ENCODE measurements at regions of chr20 and their contacts with region 1.

Region 1: GRCh38 chr20:24507182-24507853 is 37.9 kb downstream of the SYNDIG1 start:
- DNase-seq: peak in 10 of 42 donors; percentile 19 to 54 (median 35)

Region 2: DNA sequence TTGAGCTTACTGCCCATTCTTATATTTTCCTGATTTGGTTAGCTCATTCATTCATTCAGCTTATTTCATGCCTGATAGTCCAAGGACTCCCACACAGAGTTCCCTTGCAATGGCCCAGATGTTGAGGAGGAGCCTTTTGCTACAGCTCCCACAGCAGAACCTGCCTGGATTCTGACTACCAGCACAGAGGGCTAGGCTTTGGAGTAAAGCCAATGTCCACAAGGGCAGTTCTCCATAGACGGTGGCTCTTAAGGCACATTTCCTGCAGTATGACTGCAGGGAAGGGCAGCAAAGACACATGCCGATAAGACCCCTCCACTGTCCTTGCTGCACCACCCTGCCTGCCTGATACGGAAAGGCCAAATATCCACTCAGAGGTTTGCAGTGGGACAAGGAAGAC is 150.1 kb before region 1 on chr20:
- intact Hi-C with region 1: no loop called
- DNase-seq: no peak

Region 3: DNA sequence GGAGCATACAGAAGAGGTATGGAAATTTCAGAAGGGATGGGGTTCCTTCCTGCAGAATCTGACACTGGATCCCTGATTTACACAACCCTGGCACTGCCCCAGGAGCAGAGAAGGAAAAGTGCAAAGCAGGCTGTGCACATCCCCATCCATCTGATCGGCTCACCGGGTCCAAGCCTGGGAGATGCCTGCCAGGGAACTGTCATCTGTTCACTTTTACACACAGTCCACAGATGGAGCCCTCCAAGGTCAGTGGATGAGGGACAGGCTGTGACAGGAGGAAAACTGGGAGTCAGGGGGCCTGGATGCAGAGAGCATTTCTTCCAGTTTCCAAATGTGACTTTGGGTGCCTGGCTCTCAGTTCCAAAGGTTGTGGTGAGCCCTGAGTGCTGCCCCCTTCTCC is 48.9 kb before region 1 on chr20:
- intact Hi-C with region 1: loop called (anchors 5 kb)
- DNase-seq: peak in 1 of 42 donors; percentile 37

Region 4: GRCh38 chr20:24608926-24609667 is 101.8 kb after region 1 on chr20:
- intact Hi-C with region 1: no loop called
- DNase-seq: peak in 3 of 42 donors; percentile 18 to 43 (median 29)

Region 5: DNA sequence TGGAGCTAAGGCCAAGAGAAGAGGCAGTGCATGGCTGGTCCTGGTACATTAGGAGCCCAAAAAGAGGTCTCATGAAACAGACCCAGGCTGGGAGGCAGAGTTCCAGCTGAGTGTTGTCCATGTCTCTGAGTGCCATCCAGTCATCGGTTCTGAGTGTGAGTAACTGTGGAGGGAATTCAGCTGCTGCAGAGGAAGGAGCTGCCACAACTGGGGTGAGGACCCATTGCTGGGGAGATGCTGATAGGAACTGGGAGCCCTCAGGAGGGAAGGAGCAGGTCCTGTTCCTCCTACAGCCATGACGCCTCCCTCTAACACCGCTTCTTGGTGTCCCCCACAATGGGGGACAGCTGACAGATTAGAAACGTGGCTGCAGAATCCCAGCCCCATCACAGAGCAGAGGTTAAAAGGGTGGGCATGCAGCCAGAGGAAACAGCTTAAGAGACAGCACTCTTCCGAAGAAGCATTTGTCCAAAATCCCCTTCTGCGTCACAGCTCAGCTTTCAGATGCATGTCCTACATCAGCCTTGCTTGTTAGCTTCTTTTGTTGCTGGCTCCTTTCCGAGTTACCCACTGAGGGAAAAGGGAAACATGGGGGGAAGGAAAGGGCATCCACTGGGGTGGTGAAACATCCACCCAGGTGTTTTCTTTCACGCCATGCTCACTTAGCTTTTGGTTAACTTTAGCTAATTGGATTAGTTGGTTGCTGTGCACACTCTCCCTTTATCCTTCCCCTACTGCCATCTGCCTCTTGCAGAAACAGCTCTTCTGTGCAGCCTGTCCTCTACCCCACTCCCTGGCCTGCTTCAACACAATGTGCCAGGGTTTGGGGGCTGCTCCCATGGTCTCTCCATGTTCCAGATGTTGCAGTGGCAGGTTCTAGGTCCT is 201.3 kb after region 1 on chr20:
- intact Hi-C with region 1: no loop called
- DNase-seq: peak in 4 of 42 donors; percentile 1 to 22 (median 16)

Measured in head of caudate nucleus (tissue), 42 donors.